ENCODE measurements at regions of chr17 and their contacts with region 1.

Region 1: GRCh38 chr17:13962723-13963240 is 106.5 kb upstream of the COX10 start:
- DNase-seq: no peak
- ATAC-seq: no peak
- H3K4me3 ChIP-seq: no peak overlapping the region
- H3K4me3 Mint-ChIP-seq: peak overlapping the region in 1 of 10 donors; percentile 17
- H3K27ac ChIP-seq: no peak overlapping the region
- H3K27ac Mint-ChIP-seq: peak overlapping the region in 1 of 9 donors; percentile 44
- H3K4me1 ChIP-seq: no peaks in the 10 kb centered on the region
- H3K4me1 Mint-ChIP-seq: peaks cover 0 to 17% (median 3%) of the 10 kb centered on the region in 7 donors
- H3K27me3 ChIP-seq: no peaks in the 10 kb centered on the region
- H3K27me3 Mint-ChIP-seq: no peaks in the 10 kb centered on the region

Region 2: DNA sequence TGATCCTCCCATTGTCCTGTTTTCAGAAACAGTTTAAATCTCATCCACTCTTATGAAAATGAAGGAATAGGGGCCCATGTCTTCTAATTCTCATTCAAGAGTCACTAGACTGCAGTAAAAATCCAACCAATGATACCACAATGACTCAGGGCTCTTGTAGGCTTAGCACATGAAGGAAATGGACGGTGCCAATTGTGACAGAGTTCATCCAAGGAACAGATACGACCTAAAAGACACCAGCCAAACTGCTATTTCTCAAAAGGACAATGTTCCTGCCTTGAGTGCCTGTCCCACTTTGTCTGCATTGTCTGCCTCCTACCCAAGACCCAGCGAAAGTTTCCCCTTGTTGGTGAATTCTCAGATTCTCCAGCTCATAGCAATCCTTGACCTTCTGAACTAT is 98.2 kb before region 1 on chr17:
- CTCF ChIA-PET with region 1: no interaction called
- POLR2A ChIA-PET with region 1: no interaction called
- intact Hi-C with region 1: no loop called
- DNase-seq: no peak
- ATAC-seq: no peak
- H3K4me3 ChIP-seq: no peak overlapping the region
- H3K4me3 Mint-ChIP-seq: no peak overlapping the region
- H3K27ac ChIP-seq: no peak overlapping the region
- H3K27ac Mint-ChIP-seq: no peak overlapping the region
- H3K4me1 ChIP-seq: no peaks in the 10 kb centered on the region
- H3K4me1 Mint-ChIP-seq: peaks cover 0 to 5% (median 0%) of the 10 kb centered on the region in 7 donors
- H3K27me3 ChIP-seq: no peaks in the 10 kb centered on the region
- H3K27me3 Mint-ChIP-seq: peaks cover 0 to 5% (median 0%) of the 10 kb centered on the region in 5 donors

Region 3: DNA sequence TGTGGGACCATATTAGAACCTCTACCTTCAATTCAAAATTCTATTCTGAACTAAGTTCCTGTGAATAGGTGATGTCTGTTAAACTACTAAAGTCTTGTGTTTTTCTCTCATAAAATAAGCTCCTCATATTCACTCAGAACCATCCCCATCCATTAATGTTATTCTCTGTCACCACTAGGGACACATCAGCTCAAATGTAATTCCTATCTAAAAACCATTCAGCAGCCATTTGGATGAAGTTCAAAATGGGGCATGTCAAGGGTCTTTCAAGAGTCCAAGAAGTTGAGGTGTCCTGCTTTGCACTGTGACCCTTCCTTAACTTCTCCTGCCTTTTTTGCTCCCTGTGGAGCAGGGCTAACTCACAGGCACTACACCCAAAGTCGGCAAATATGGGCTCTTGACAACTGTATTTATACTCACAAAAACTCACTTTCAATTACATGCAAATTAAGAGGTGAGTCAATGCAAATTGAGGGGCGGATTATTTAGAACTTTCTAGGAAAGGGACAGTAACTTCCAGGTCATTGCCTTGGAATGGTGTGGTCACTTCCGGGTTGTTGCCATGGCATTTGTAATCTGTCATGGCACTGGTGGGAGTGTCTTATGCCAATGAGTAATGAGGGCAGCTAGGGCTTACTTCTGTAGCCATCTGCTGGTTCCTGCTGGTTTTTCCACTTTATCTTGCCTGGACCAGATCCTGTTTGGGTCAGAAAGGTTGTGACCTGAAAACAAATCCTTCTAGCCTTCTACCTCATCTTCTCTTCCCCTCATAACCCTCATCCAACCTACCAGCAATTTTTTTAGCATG is 21.7 kb before region 1 on chr17:
- CTCF ChIA-PET with region 1: no interaction called
- POLR2A ChIA-PET with region 1: no interaction called
- intact Hi-C with region 1: no loop called
- DNase-seq: no peak
- ATAC-seq: no peak
- H3K4me3 ChIP-seq: no peak overlapping the region
- H3K4me3 Mint-ChIP-seq: no peak overlapping the region
- H3K27ac ChIP-seq: no peak overlapping the region
- H3K27ac Mint-ChIP-seq: no peak overlapping the region
- H3K4me1 ChIP-seq: no peaks in the 10 kb centered on the region
- H3K4me1 Mint-ChIP-seq: no peaks in the 10 kb centered on the region
- H3K27me3 ChIP-seq: no peaks in the 10 kb centered on the region
- H3K27me3 Mint-ChIP-seq: no peaks in the 10 kb centered on the region

Region 4: GRCh38 chr17:14118951-14119350 is 156.2 kb after region 1 on chr17:
- CTCF ChIA-PET with region 1: no interaction called
- POLR2A ChIA-PET with region 1: no interaction called
- intact Hi-C with region 1: loop called in 1 of 2 experiments (anchors 5 kb)
- DNase-seq: peak in 3 of 9 donors; percentile 11 to 48 (median 40)
- ATAC-seq: peak; percentile 79
- H3K4me3 ChIP-seq: no peak overlapping the region
- H3K4me3 Mint-ChIP-seq: peak overlapping the region in 5 of 10 donors; percentile 4 to 71 (median 8)
- H3K27ac ChIP-seq: no peak overlapping the region
- H3K27ac Mint-ChIP-seq: peak overlapping the region; percentile 65 to 96 (median 74)
- H3K4me1 ChIP-seq: peaks cover 0 to 7% of the 10 kb centered on the region in 2 donors
- H3K4me1 Mint-ChIP-seq: peaks cover 40 to 89% (median 75%) of the 10 kb centered on the region in 7 donors
- H3K27me3 ChIP-seq: no peaks in the 10 kb centered on the region
- H3K27me3 Mint-ChIP-seq: no peaks in the 10 kb centered on the region